ENCODE measurements at regions of chr16 and their contacts with region 1.

Region 1: GRCh38 chr16:4328046-4328503 is 12.2 kb downstream of the GLIS2 start:
- DNase-seq: peak; percentile 92

Region 2: GRCh38 chr16:4194661-4195060 is 133.4 kb before region 1 on chr16:
- intact Hi-C with region 1: loop called in 1 of 2 experiments (anchors 5 kb)
- DNase-seq: no peak

Region 3: GRCh38 chr16:4261557-4262172 is 66.4 kb before region 1 on chr16:
- intact Hi-C with region 1: loop called in 1 of 2 experiments (anchors 5 kb)
- DNase-seq: no peak

Region 4: GRCh38 chr16:4293822-4294457 is 34.1 kb before region 1 on chr16:
- intact Hi-C with region 1: loop called (anchors 2 to 5 kb)
- DNase-seq: no peak

Measured in posterior vena cava (tissue), 2 donors.